ENCODE measurements at regions of chr6 and their contacts with region 1.

Region 1: DNA sequence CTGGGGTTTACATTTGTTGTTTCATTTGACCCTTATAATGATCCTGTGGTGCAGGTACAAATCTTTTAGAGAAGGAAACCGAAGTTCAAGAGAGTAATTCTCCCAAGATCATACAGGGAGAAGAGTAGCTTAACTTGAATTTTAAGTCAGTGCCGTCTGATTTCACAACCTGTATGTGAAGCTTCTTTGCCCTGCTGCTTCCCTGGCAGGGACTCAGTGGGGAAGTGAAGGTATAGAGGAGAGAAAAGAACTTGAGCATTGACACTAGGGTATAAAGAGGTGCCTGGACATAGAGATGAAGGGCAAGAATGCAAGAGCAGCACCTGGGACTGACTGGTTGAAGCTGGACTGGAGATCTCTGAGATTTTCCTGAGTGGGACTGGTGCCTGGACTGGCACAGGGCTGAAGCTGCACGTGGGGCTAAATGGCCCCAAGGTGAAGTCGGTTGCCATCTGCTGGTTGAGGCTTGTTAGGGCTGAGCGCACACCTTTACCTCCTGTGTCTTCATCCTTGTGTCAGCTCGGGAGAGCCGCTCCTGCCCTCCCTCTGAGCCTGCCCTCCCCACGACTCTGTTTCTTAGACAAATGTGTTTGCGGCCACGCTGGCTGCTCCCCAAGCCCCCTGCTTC is 41.8 kb downstream of the FARS2 start:
- DNase-seq: peak; percentile 76 to 81
- H3K4me3 ChIP-seq: no peak overlapping the region
- H3K27ac ChIP-seq: no peak overlapping the region
- H3K4me1 ChIP-seq: peaks cover 0 to 25% (median 16%) of the 10 kb centered on the region in 4 donors
- H3K27me3 ChIP-seq: no peaks in the 10 kb centered on the region
- CTCF ChIP-seq: peak in 5 of 7 experiments; percentile 40 to 62 (median 47)
- EP300 ChIP-seq: no peak
- POLR2A ChIP-seq: no peak

Region 2: GRCh38 chr6:5103250-5103649 is 199.9 kb before region 1 on chr6:
- intact Hi-C with region 1: no loop called
- DNase-seq: no peak
- H3K4me3 ChIP-seq: no peak overlapping the region
- H3K27ac ChIP-seq: no peak overlapping the region
- H3K4me1 ChIP-seq: no peaks in the 10 kb centered on the region
- H3K27me3 ChIP-seq: no peaks in the 10 kb centered on the region
- CTCF ChIP-seq: no peak
- EP300 ChIP-seq: no peak
- POLR2A ChIP-seq: no peak

Region 3: GRCh38 chr6:5143634-5144311 is 159.3 kb before region 1 on chr6:
- intact Hi-C with region 1: loop called (anchors 10 kb)
- DNase-seq: peak; percentile 89 to 95
- H3K4me3 ChIP-seq: no peak overlapping the region
- H3K27ac ChIP-seq: no peak overlapping the region
- H3K4me1 ChIP-seq: peaks cover 0 to 9% (median 1%) of the 10 kb centered on the region in 4 donors
- H3K27me3 ChIP-seq: no peaks in the 10 kb centered on the region
- CTCF ChIP-seq: peak in 5 of 7 experiments; percentile 65 to 85 (median 83)
- EP300 ChIP-seq: no peak
- POLR2A ChIP-seq: no peak

Region 4: GRCh38 chr6:5736016-5736738 is 433.1 kb after region 1 on chr6:
- intact Hi-C with region 1: no loop called
- DNase-seq: no peak
- H3K4me3 ChIP-seq: no peak overlapping the region
- H3K27ac ChIP-seq: no peak overlapping the region
- H3K4me1 ChIP-seq: no peaks in the 10 kb centered on the region
- H3K27me3 ChIP-seq: no peaks in the 10 kb centered on the region
- CTCF ChIP-seq: no peak
- EP300 ChIP-seq: no peak
- POLR2A ChIP-seq: no peak

Measured in stomach (tissue), 19 donors.